Tibial artery (tissue), 4 donors: ENCODE measurements at regions of chr1 and their contacts with region 1.

Region 1: GRCh38 chr1:51192213-51192843 is 43.7 kb upstream of the RNF11 start:
- DNase-seq: peak; percentile 66 to 68
- H3K4me3 ChIP-seq: no peak overlapping the region
- H3K27ac ChIP-seq: no peak overlapping the region
- H3K4me1 ChIP-seq: no peaks in the 10 kb centered on the region
- H3K27me3 ChIP-seq: no peaks in the 10 kb centered on the region
- CTCF ChIP-seq: peak; percentile 64 to 84

Region 2: DNA sequence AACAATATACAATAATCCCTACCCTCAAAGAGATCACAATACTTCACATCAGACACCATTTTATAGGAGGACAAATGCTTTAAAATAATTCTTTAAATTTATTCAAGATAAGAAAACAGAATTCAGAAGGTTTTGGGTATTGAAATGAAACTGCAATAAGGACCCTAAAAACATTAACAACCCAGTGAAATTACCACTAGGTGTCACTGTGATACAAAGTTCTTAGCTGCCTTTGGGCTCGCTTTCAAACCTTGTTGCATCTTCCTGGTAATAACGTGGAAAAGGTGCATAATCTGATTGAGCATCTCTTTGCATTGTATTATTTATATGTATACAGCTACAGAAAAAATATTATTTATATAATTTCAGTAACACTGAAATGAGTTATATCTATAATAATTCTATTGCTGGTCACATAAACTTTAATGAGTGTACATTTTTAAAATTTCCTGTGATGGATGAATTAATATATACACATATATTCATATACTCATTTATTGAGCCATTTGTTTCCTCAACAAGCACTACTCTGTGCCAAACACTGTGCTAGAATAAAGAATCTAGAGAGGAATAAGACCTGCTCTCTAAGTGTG is 417.5 kb before region 1 on chr1:
- intact Hi-C with region 1: loop called (anchors 10 kb)
- DNase-seq: no peak
- H3K4me3 ChIP-seq: no peak overlapping the region
- H3K27ac ChIP-seq: no peak overlapping the region
- H3K4me1 ChIP-seq: no peaks in the 10 kb centered on the region
- H3K27me3 ChIP-seq: no peaks in the 10 kb centered on the region
- CTCF ChIP-seq: peak; percentile 59 to 67

Region 3: GRCh38 chr1:50930193-50930592 is 262.1 kb before region 1 on chr1:
- intact Hi-C with region 1: loop called (anchors 5 kb)
- DNase-seq: no peak
- H3K4me3 ChIP-seq: no peak overlapping the region
- H3K27ac ChIP-seq: no peak overlapping the region
- H3K4me1 ChIP-seq: peaks cover 0 to 8% (median 2%) of the 10 kb centered on the region in 4 donors
- H3K27me3 ChIP-seq: no peaks in the 10 kb centered on the region
- CTCF ChIP-seq: no peak

Region 4: DNA sequence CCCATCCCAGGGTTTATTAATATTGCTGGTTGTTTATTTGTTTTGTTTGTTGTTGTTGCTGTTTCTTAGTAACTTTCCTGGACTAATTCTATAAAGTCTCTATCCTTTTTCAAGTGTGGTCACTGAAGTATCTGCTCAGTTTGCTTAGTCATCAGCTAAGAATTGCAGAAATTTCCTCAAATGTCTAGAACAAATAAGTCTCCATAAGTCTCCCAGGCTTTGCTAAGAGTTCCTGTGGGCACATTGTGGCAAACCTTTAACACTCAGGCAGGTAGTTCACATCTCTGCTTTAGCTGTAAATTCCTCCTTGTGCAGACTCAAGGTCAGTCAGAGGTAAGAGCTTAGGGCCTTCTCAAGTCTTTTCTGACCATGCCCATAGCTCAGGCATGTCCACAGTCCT is 129.2 kb before region 1 on chr1:
- intact Hi-C with region 1: no loop called
- DNase-seq: no peak
- H3K4me3 ChIP-seq: no peak overlapping the region
- H3K27ac ChIP-seq: no peak overlapping the region
- H3K4me1 ChIP-seq: no peaks in the 10 kb centered on the region
- H3K27me3 ChIP-seq: no peaks in the 10 kb centered on the region
- CTCF ChIP-seq: no peak

Region 5: DNA sequence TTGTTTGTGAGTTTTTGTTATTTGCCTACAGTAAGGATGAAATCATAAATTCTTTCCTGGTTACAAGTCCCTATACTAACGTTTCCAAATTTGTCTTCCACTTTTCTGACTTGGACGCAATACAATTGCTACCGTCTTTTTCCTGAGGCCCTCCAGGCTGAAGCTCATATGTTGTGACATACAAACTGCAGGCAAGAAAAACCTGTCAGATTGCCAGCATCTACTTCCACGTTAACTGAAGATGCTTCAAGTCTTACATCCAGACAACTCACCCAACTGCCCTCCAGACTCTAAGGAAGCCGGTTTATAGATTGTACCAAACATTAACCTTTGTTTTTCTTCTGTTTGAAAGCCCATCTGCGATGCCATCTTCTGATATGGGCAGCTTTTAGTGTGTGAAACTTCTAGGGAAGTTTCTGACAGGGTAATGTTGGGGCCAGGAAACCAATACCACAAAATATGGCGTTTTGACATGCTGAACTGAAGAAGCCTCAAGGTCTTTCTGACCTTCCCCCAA is 22.3 kb after region 1 on chr1:
- intact Hi-C with region 1: no loop called
- DNase-seq: no peak
- H3K4me3 ChIP-seq: no peak overlapping the region
- H3K27ac ChIP-seq: no peak overlapping the region
- H3K4me1 ChIP-seq: peaks cover 0 to 22% (median 6%) of the 10 kb centered on the region in 4 donors
- H3K27me3 ChIP-seq: no peaks in the 10 kb centered on the region
- CTCF ChIP-seq: no peak

Region 6: DNA sequence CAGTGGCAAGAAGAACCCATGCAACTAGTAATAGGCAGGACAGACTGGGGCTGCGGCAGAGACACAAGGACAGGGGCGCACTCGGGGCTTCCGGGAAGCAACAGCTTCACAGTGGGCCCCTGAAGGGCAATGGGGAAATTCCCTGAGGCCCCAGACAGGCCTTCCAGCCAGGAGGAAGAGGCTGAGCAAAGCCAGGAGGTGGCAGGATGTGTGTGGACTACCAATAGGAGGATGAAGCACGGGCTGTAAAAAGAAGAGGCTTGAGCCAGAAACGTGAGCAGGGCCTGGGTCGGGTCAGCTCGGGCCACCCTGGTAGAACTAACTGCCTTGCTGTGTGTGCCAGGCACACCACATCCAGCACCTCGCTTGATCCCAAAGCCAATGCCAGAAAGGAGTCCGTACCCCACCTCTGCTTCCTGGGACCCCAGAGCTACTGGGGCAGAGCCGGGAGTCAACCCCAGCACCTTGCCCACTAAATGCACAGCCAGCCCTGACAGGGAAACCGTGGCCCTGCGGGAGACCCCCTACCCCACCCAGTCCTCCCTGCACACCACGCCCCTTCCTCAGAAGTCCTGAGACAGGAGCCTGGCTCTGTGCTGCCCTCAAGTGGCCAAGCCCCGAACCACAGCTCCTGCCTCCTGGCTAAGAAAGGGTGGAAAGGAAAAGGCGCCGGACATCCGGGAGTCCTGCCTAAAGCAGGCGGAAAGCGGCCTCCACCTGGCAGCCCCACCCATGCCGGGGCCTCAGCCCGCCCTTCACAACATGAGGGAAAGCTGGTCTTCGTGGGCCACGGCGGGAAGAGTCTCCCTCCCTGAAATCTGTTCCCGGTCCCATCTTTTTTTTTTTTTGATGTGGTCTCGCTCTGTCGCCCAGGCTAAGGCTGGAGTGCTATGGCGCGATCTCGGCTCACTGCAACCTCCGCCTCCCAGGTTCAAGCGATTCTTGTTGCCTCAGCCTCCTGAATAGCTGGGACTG is 104.3 kb after region 1 on chr1:
- intact Hi-C with region 1: loop called (anchors 5 kb)
- DNase-seq: peak; percentile 82 to 90
- H3K4me3 ChIP-seq: peak overlapping the region; percentile 54 to 61
- H3K27ac ChIP-seq: peak overlapping the region; percentile 36 to 59
- H3K4me1 ChIP-seq: peaks cover 0 to 18% (median 9%) of the 10 kb centered on the region in 4 donors
- H3K27me3 ChIP-seq: no peaks in the 10 kb centered on the region
- CTCF ChIP-seq: peak; percentile 91 to 99

Region 7: DNA sequence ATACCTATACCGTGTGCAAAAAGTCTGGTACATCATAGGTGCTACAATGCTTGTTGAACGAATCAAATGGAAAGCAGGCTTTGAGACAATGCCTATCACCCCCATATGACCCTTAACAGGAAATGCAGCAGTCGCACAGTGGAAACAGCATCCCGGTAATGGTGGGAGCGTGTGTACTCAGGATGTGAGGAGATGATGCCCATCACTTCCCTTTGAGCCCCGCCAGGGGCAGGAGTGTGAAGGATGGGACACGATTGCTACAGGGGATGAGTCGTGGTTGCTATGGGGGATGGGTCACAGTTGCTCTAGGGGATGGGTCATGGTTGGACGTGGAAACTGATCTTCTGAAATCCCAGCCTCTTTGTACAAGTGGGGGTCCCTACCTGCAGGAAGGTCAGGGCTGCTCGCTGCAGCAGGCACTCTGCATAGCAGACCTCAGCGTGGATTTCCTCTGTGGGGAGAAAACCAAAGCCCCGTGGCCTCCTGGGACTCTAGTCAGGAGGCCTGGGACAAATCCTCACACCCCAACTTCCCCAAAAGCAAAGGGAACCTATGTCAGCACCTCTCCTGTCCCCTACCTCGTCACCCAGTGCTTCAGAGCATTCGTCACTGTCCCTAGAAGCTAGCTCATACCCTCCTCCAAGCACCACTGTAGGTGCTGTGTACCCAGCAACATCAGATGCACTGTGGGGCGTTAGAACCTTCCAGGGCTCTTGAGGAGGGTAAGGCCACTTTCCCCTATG is 118.7 kb after region 1 on chr1:
- intact Hi-C with region 1: no loop called
- DNase-seq: no peak
- H3K4me3 ChIP-seq: no peak overlapping the region
- H3K27ac ChIP-seq: no peak overlapping the region
- H3K4me1 ChIP-seq: peaks cover 0 to 10% (median 0%) of the 10 kb centered on the region in 4 donors
- H3K27me3 ChIP-seq: no peaks in the 10 kb centered on the region
- CTCF ChIP-seq: no peak